Left lung (tissue), 14 donors: ENCODE measurements at regions of chr7 and their contacts with region 1.

Region 1: DNA sequence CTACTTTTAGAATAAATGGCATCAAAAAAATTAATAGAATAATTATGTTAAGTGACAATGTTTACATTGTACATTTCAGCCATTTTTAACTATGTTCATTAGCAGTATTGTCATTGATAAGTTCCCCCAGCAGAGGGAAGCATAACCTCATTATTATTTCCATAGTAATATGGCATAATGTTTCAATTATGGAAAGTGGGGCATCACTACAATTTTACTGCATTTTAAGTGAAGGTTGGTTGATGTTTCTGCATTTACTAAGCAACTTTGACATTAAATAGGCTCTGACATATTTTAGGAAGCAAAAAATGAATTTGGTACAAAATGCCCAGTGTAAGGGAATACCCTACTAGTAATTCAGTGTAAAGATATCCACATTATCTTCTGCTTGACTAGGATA is 218.3 kb downstream of the SEMA3A start:
- DNase-seq: peak in 1 of 4 donors; percentile 39
- ATAC-seq: peak; percentile 78
- H3K4me3 ChIP-seq: no peak overlapping the region
- H3K27ac ChIP-seq: no peak overlapping the region
- H3K4me1 ChIP-seq: no peaks in the 10 kb centered on the region
- H3K27me3 ChIP-seq: no peaks in the 10 kb centered on the region
- CTCF ChIP-seq: peak; percentile 55 to 64

Region 2: DNA sequence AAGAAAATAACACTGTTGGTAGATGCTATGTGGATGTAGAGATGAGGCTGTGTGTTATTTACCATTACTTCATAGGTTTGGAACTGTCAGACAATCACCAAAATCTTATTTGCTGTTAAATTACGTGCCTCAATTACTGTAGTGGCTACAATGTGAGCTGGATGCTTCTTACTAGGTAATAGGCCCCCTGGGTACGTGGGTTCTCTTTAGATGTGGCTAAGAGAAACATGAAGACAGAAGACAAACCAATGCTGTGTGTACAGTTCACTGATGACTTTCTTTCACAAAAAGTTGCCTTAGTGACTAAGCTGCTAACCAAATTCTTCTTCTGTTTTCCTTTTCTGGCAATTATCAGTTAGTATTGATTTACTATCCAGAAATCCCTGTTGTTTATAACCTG is 472.0 kb before region 1 on chr7:
- intact Hi-C with region 1: no loop called
- DNase-seq: no peak
- ATAC-seq: no peak
- H3K4me3 ChIP-seq: no peak overlapping the region
- H3K27ac ChIP-seq: no peak overlapping the region
- H3K4me1 ChIP-seq: no peaks in the 10 kb centered on the region
- H3K27me3 ChIP-seq: no peaks in the 10 kb centered on the region
- CTCF ChIP-seq: no peak

Region 3: DNA sequence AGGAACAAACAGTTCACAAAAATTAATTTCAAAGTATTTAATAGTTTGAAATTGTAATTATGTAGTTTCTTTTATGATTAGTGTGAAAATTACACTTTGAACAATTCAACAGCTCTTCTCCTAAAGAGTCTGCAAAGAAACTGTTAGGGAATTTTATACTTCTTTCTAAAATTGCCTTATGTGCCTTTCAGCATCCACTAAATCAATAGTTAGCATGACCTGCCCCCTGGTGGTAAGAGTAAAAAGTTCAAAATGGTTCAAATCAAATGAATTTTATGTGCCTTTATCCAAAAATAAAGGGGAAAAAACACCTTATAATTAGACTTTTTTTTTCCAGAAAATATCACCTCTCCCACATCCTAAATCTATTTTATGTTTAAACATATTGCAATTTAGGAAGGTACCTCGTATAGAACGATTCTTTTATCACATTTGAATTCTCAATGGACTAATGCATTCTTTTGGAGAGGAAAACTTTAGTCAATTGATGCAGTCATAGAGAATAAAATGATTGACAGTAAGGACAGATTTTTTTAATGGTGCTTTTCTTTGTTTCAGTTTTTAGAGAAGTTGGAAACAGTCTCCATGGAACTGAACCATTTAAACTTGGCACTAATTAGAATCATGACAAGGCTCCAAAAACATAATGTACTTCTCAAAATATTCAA is 1046.9 kb after region 1 on chr7:
- intact Hi-C with region 1: loop called in 1 of 2 experiments (anchors 10 kb)
- DNase-seq: peak in 2 of 4 donors; percentile 43 to 65
- ATAC-seq: peak; percentile 53
- H3K4me3 ChIP-seq: no peak overlapping the region
- H3K27ac ChIP-seq: no peak overlapping the region
- H3K4me1 ChIP-seq: no peaks in the 10 kb centered on the region
- H3K27me3 ChIP-seq: no peaks in the 10 kb centered on the region
- CTCF ChIP-seq: peak; percentile 45 to 71